ENCODE measurements at regions of chr13 and their contacts with region 1.

Region 1: DNA sequence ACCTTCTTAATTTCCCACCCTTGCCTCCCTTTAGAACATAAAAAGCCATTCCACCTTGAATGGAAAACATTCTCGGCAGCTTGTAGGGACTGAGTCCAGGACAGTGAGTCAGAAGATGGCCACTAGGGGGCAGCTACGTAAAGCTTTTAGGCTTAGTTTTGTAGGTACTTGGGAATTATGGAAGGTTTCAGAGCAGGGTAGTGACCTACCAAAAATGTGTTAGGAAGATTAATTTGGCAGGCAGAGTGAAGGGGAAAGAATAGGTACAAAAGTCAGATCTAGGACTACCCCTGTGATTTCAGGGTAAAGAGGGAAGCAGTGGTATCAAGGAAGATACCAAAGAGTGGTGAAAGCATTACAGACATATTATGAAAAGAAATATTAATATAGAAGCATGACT is 198.4 kb downstream of the NDFIP2 start:
- DNase-seq: peak; percentile 73
- ATAC-seq: peak; percentile 30
- H3K4me3 Mint-ChIP-seq: no peak overlapping the region
- H3K27ac Mint-ChIP-seq: no peak overlapping the region
- H3K4me1 Mint-ChIP-seq: no peaks in the 10 kb centered on the region
- H3K27me3 Mint-ChIP-seq: peaks cover 8% of the 10 kb centered on the region

Region 2: GRCh38 chr13:79662882-79663281 is 16.5 kb before region 1 on chr13:
- CTCF ChIA-PET with region 1: interaction called, 12 read pairs
- POLR2A ChIA-PET with region 1: no interaction called
- intact Hi-C with region 1: no loop called
- DNase-seq: no peak
- ATAC-seq: no peak
- H3K4me3 Mint-ChIP-seq: no peak overlapping the region
- H3K27ac Mint-ChIP-seq: no peak overlapping the region
- H3K4me1 Mint-ChIP-seq: no peaks in the 10 kb centered on the region
- H3K27me3 Mint-ChIP-seq: peaks cover 3% of the 10 kb centered on the region

Region 3: DNA sequence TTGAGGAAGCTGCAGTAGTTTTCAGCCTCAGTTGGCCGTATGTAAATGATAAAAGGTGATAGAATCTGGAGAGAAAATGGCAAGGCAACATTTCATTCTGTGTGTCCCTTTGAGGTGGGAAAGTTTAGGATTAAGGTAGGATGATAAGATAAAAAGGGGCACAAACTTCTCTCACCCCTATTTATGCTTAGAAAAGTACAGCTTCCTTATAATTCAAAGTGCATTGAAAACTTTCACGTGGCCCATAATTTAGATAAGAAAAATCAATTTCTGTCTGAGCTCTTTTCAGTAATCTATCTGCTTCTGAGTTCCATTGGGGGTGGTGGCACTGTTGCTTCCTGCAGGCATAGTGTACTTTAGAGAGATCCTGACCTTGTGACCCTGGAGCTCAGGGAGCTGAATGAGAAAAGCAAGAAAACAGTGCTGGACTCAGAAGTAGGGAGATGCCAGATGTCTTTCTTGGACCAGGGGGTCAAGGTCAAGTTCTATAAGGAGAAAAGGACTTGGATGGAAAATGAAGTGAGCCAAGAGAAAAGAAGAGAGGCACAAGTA is 11.1 kb before region 1 on chr13:
- CTCF ChIA-PET with region 1: interaction called, 12 read pairs
- POLR2A ChIA-PET with region 1: no interaction called
- intact Hi-C with region 1: no loop called
- DNase-seq: no peak
- ATAC-seq: no peak
- H3K4me3 Mint-ChIP-seq: no peak overlapping the region
- H3K27ac Mint-ChIP-seq: no peak overlapping the region
- H3K4me1 Mint-ChIP-seq: no peaks in the 10 kb centered on the region
- H3K27me3 Mint-ChIP-seq: peaks cover 5% of the 10 kb centered on the region

Region 4: DNA sequence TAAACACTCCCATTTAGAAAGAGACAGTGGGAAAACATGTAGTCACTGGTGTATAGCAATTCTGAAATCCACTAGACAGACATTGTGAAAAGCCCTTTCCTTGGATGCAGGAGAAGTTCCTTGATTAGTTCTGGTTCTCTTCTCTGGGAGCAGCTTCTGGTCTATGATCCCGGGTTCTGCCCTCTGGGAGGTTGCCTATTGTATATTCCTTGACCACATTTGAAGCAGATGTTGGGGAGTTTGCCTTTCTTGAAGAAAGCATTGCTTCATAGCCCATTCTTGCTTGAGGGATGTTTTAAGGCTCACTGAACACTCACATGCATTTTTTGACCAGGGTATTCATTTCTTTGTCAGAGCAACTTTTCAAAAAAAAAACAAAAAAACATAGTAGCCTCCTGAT is 13.5 kb after region 1 on chr13:
- CTCF ChIA-PET with region 1: interaction called, 14 read pairs
- POLR2A ChIA-PET with region 1: no interaction called
- intact Hi-C with region 1: no loop called
- DNase-seq: no peak
- ATAC-seq: no peak
- H3K4me3 Mint-ChIP-seq: no peak overlapping the region
- H3K27ac Mint-ChIP-seq: no peak overlapping the region
- H3K4me1 Mint-ChIP-seq: no peaks in the 10 kb centered on the region
- H3K27me3 Mint-ChIP-seq: peaks cover 6% of the 10 kb centered on the region

Region 5: DNA sequence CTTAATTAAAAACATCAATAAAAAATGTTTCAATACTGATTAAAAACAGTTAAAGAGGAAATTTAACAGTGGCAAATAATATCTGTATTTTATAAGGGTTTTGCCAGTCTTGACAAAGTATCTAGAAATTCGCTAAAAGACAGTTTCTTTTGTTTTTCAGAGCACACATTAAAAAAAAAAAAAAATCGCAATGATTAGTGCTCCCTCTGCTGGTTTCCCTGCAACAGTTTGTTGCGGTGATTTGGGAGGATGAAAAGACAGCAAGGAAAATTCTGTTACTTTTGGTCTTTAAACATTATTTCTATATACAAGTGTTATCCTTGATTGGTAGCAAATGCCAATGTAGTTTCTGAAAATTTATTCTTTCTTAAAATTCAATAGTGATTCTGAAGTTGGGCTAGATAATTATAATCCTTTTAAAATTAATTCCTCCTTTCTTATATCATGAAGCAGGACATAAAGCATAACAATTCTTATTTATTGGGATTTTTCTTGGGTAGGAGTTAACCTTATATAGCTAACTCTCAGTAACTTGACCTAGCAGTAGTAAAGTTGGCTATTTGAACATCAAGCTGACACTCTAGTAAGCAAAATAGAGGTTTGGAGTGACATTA is 684.7 kb after region 1 on chr13:
- CTCF ChIA-PET with region 1: interaction called, 6 read pairs
- POLR2A ChIA-PET with region 1: no interaction called
- intact Hi-C with region 1: loop called (anchors 1 to 5 kb)
- DNase-seq: no peak
- ATAC-seq: no peak
- H3K4me3 Mint-ChIP-seq: no peak overlapping the region
- H3K27ac Mint-ChIP-seq: no peak overlapping the region
- H3K4me1 Mint-ChIP-seq: no peaks in the 10 kb centered on the region
- H3K27me3 Mint-ChIP-seq: peaks cover 2% of the 10 kb centered on the region

Region 6: GRCh38 chr13:81017513-81018152 is 1338.3 kb after region 1 on chr13:
- CTCF ChIA-PET with region 1: interaction called, 8 read pairs
- POLR2A ChIA-PET with region 1: no interaction called
- intact Hi-C with region 1: loop called in 1 of 2 experiments (anchors 2 kb)
- DNase-seq: no peak
- ATAC-seq: no peak
- H3K4me3 Mint-ChIP-seq: no peak overlapping the region
- H3K27ac Mint-ChIP-seq: no peak overlapping the region
- H3K4me1 Mint-ChIP-seq: no peaks in the 10 kb centered on the region
- H3K27me3 Mint-ChIP-seq: no peaks in the 10 kb centered on the region

Measured in activated CD4-positive, alpha-beta T cell treated with anti-CD3 and anti-CD28 coated beads for 36 hours (primary cell).